ENCODE measurements at regions of chr4 and their contacts with region 1.

Region 1: DNA sequence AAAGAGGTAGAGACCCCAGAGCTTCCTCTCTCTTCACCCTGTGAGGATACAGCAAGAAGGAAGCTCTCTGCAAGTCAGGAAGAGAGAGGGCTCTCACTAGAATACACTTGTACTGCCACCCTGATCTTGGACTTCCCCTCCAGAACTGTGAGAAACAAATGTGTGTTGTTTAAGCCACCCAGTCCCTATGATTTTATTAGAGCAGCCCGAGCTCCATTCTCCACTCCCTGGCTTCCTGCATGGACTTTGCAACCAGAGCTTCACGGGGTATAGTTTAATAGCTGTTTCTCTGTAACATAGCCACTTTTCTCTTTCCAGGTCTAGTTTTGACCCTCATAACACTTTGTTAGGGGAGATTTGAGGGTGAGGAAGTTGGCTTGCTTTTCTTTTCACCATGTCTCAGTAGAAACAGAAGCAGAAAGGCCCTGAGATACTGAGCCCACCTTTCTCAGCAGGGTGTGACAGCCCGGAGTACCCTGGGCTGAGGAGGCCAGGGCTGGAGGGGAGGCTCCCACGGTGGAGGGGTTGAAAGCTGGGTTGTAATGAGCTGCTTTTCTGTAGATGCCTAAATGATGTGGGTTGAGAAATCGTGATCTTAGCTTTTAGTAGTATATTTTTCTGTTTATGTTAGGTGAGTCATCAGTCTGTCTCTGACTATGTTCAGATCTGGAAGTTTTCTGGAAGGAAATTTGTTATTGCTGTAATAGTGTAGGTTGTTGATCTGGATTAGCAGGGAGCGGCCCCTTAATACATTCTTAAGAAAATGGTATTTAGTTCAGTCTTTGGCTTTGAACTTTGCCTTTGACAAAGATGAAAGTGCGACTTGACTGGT is 118.6 kb downstream of the PTTG2 start:
- DNase-seq: peak; percentile 55 to 87 (median 82)
- H3K4me3 ChIP-seq: peak overlapping the region in 2 of 3 experiments; percentile 17 to 56
- H3K4me3 Mint-ChIP-seq: peak overlapping the region; percentile 60 to 65
- H3K27ac ChIP-seq: peak overlapping the region; percentile 98 to 99
- H3K27ac Mint-ChIP-seq: peak overlapping the region; percentile 94 to 99 (median 98)
- H3K4me1 ChIP-seq: peaks cover 96 to 99% of the 10 kb centered on the region in 2 donors
- H3K4me1 Mint-ChIP-seq: peaks cover 87% of the 10 kb centered on the region
- H3K27me3 ChIP-seq: no peaks in the 10 kb centered on the region
- H3K27me3 Mint-ChIP-seq: peaks cover 0 to 2% (median 0%) of the 10 kb centered on the region in 3 donors
- CTCF ChIP-seq: no peak

Region 2: GRCh38 chr4:37780444-37781150 is 298.2 kb before region 1 on chr4:
- intact Hi-C with region 1: no loop called
- DNase-seq: peak in 2 of 3 donors; percentile 12 to 17
- H3K4me3 ChIP-seq: no peak overlapping the region
- H3K4me3 Mint-ChIP-seq: no peak overlapping the region
- H3K27ac ChIP-seq: peak overlapping the region in 1 of 2 donors; percentile 17
- H3K27ac Mint-ChIP-seq: peak overlapping the region in 5 of 7 donors; percentile 63 to 73 (median 70)
- H3K4me1 ChIP-seq: peaks cover 7 to 12% of the 10 kb centered on the region in 2 donors
- H3K4me1 Mint-ChIP-seq: peaks cover 14% of the 10 kb centered on the region
- H3K27me3 ChIP-seq: no peaks in the 10 kb centered on the region
- H3K27me3 Mint-ChIP-seq: no peaks in the 10 kb centered on the region
- CTCF ChIP-seq: peak; percentile 19

Region 3: DNA sequence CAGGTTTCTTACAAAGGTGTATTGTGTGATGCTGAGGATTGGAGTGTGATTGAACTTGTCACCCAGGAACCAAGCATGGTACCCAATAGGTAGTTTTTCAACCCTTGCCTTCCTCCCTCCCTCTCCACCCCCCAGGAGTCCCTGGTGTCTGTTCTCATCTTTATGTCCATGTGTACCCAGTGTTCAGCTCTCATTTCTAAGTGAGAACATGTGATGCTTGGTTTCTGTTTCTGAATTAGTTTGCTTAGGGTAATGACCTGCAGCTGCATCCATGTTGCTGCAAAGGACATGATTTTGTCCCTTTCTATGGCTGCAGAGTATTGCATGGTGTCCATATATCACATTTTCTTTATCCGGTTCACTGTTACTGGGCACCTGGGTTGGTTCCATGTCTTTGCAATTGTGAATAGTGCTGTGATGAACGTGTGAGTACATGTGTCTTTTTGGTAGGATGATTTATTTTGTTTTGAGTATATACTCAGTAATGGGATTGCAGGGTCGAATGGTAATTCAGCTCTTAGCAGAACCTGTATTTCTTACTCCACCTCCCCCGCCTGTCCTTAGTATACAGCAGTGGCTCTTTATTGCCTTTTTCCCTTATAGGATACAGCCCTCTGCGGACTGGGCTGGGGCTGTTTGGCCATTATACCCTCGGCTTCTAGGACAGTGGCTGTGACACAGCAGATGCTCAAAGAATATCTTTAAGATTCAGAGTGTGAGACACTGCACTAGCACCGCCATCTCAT is 26.8 kb after region 1 on chr4:
- intact Hi-C with region 1: no loop called
- DNase-seq: no peak
- H3K4me3 ChIP-seq: no peak overlapping the region
- H3K4me3 Mint-ChIP-seq: no peak overlapping the region
- H3K27ac ChIP-seq: peak overlapping the region in 1 of 2 donors; percentile 17
- H3K27ac Mint-ChIP-seq: peak overlapping the region in 3 of 7 donors; percentile 32 to 73 (median 68)
- H3K4me1 ChIP-seq: no peaks in the 10 kb centered on the region
- H3K4me1 Mint-ChIP-seq: peaks cover 4% of the 10 kb centered on the region
- H3K27me3 ChIP-seq: no peaks in the 10 kb centered on the region
- H3K27me3 Mint-ChIP-seq: peaks cover 0 to 3% (median 0%) of the 10 kb centered on the region in 3 donors
- CTCF ChIP-seq: no peak

Region 4: DNA sequence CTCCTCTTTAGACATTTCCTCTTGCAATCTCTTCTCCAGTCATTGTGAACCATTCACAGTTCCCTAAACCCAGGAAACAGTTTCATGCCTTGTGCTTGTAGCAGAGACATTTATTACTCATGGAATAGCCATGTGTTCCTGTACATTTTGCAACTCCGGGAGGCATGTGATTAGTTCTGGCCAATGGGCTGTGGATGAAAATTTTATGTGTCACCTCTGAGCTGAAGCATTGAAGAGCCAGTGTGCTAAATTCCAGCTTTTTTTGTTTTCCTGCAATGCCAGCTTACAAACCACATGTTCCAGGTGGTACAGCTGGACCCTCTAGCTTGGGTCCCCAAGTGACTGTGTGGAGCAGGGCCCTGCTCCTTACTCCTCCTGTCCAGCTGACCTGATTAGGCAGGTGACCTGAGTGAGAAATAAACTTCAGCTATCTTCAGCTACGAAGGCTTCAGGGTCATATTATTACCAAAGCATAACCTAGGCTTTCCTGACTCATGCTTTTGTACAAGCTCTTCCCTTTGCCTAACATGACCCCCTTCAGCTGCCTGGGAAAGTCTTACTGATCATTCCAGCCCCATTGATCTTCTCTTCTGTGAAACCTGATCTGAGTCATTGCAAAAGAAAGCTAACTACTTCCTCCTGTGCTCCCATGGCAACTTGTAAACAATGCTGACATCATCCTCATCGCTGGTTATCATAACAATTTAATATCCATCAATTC is 81.8 kb after region 1 on chr4:
- intact Hi-C with region 1: loop called (anchors 5 kb)
- DNase-seq: peak; percentile 92 to 98 (median 97)
- H3K4me3 ChIP-seq: no peak overlapping the region
- H3K4me3 Mint-ChIP-seq: no peak overlapping the region
- H3K27ac ChIP-seq: peak overlapping the region; percentile 94 to 97
- H3K27ac Mint-ChIP-seq: peak overlapping the region; percentile 96 to 100 (median 99)
- H3K4me1 ChIP-seq: peaks cover 54 to 55% of the 10 kb centered on the region in 2 donors
- H3K4me1 Mint-ChIP-seq: peaks cover 57% of the 10 kb centered on the region
- H3K27me3 ChIP-seq: no peaks in the 10 kb centered on the region
- H3K27me3 Mint-ChIP-seq: peaks cover 0 to 4% (median 2%) of the 10 kb centered on the region in 3 donors
- CTCF ChIP-seq: no peak

Region 5: GRCh38 chr4:38867478-38868058 is 788.8 kb after region 1 on chr4 and contains the start of gene FAM114A1:
- intact Hi-C with region 1: loop called in 1 of 2 experiments (anchors 10 kb)
- DNase-seq: peak; percentile 42 to 54 (median 51)
- H3K4me3 ChIP-seq: peak within 1 kb of the TSS; percentile 81 to 86 (median 82)
- H3K4me3 Mint-ChIP-seq: peak within 1 kb of the TSS; percentile 74 to 88
- H3K27ac ChIP-seq: peak within 1 kb of the TSS; percentile 49 to 77
- H3K27ac Mint-ChIP-seq: peak within 1 kb of the TSS; percentile 75 to 89 (median 87)
- H3K4me1 ChIP-seq: peaks cover 33 to 42% of the 10 kb centered on the region in 2 donors
- H3K4me1 Mint-ChIP-seq: peaks cover 39% of the 10 kb centered on the region
- H3K27me3 ChIP-seq: no peaks in the 10 kb centered on the region
- H3K27me3 Mint-ChIP-seq: no peaks in the 10 kb centered on the region
- CTCF ChIP-seq: no peak
- polyA plus RNA-seq, gene FAM114A1: 3.2 to 12.0 (median 4.1) TPM